A673 (cell line): ENCODE measurements at regions of chr18 and their contacts with region 1.

Region 1: DNA sequence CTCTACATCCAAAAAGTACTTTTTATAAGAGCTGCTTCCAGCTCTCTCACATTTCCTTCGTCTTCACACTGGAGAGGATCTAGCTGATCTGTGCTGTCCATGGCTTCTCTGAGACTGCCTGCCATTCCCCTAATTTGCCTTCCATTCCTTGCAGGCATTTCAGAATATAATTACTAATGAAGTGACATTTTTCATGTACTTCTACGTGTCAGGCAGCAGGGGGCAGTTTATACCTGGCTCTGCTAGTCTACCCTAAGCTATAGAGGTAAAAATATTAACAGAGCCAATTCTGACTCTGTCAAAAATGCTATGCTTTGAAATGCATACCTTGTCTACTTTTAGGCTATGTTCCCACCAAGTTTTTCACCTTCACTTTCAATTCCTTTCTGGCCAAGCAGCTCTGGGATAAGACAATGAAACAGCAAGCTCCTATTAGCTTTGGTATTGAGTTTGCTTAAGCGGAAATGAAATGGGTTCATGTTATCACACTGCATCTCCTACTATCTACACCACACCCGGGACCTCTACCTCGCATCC is 81.9 kb downstream of the MEP1B start:
- DNase-seq: peak; percentile 67
- H3K4me3 ChIP-seq: no peak overlapping the region
- H3K27ac ChIP-seq: no peak overlapping the region
- H3K4me1 ChIP-seq: no peaks in the 10 kb centered on the region
- H3K27me3 ChIP-seq: no peaks in the 10 kb centered on the region
- CTCF ChIP-seq: peak; percentile 80

Region 2: GRCh38 chr18:31996007-31996406 is 275.7 kb before region 1 on chr18:
- CTCF ChIA-PET with region 1: no interaction called
- POLR2A ChIA-PET with region 1: no interaction called
- intact Hi-C with region 1: no loop called
- DNase-seq: peak; percentile 20
- H3K4me3 ChIP-seq: no peak overlapping the region
- H3K27ac ChIP-seq: no peak overlapping the region
- H3K4me1 ChIP-seq: no peaks in the 10 kb centered on the region
- H3K27me3 ChIP-seq: no peaks in the 10 kb centered on the region
- CTCF ChIP-seq: no peak

Region 3: GRCh38 chr18:32158108-32158624 is 113.6 kb before region 1 on chr18:
- CTCF ChIA-PET with region 1: interaction called, 5 read pairs
- POLR2A ChIA-PET with region 1: no interaction called
- intact Hi-C with region 1: loop called (anchors 5 kb)
- DNase-seq: peak; percentile 94
- H3K4me3 ChIP-seq: peak overlapping the region; percentile 29
- H3K27ac ChIP-seq: no peak overlapping the region
- H3K4me1 ChIP-seq: peaks cover 7% of the 10 kb centered on the region
- H3K27me3 ChIP-seq: no peaks in the 10 kb centered on the region
- CTCF ChIP-seq: peak; percentile 92

Region 4: GRCh38 chr18:32470713-32471633 is 199.2 kb after region 1 on chr18 and contains the start of gene GAREM1:
- CTCF ChIA-PET with region 1: interaction called, 45 read pairs
- POLR2A ChIA-PET with region 1: no interaction called
- intact Hi-C with region 1: loop called (anchors 2 kb)
- DNase-seq: peak; percentile 97
- H3K4me3 ChIP-seq: peak within 1 kb of the TSS; percentile 77
- H3K27ac ChIP-seq: no peak within 1 kb of the TSS
- H3K4me1 ChIP-seq: peaks cover 5% of the 10 kb centered on the region
- H3K27me3 ChIP-seq: no peaks in the 10 kb centered on the region
- CTCF ChIP-seq: peak; percentile 67
- total RNA-seq, gene GAREM1: 8.4 and 9.5 TPM in 2 replicates

Region 5: GRCh38 chr18:32552421-32553030 is 280.8 kb after region 1 on chr18:
- CTCF ChIA-PET with region 1: interaction called, 10 read pairs
- POLR2A ChIA-PET with region 1: no interaction called
- intact Hi-C with region 1: loop called (anchors 2 kb)
- DNase-seq: peak; percentile 79
- H3K4me3 ChIP-seq: no peak overlapping the region
- H3K27ac ChIP-seq: no peak overlapping the region
- H3K4me1 ChIP-seq: no peaks in the 10 kb centered on the region
- H3K27me3 ChIP-seq: no peaks in the 10 kb centered on the region
- CTCF ChIP-seq: peak; percentile 79

Region 6: GRCh38 chr18:32669549-32670165 is 397.9 kb after region 1 on chr18:
- CTCF ChIA-PET with region 1: interaction called, 5 read pairs
- POLR2A ChIA-PET with region 1: no interaction called
- intact Hi-C with region 1: loop called (anchors 10 kb)
- DNase-seq: peak; percentile 23
- H3K4me3 ChIP-seq: no peak overlapping the region
- H3K27ac ChIP-seq: no peak overlapping the region
- H3K4me1 ChIP-seq: peaks cover 11% of the 10 kb centered on the region
- H3K27me3 ChIP-seq: no peaks in the 10 kb centered on the region
- CTCF ChIP-seq: peak; percentile 55